Endothelial cell of umbilical vein (primary cell): ENCODE measurements at regions of chr1 and their contacts with region 1.

Region 1: DNA sequence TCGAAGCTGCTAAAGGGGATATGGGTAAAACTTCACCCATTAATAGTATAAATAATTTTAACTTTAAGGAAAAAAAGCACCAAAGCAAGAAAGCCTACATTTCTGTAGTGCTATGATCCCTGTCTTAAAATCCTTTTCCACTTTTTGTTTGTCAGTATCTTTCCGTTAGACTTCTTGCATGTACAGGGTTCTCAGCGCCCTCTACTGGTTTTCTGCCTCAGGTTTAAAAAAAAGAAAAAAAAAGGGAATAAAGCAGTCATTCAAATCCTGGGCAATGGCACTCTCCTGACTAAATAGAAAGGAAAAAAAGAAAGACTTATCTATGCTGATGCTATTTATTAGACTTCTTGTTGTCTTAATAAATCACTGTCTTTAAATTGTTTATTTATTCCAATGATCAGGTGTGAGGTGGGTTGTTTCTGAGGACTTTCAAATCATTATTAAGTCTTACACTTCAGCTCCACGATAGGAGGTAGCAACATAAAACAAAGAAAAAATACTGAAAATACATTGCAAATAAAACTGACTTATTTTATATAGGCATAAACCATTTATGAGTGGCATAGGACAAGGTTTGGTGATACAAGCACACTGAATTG is 475.4 kb upstream of the NR5A2 start:
- DNase-seq: peak; percentile 77
- H3K4me3 ChIP-seq: no peak overlapping the region
- H3K27ac ChIP-seq: no peak overlapping the region
- H3K4me1 ChIP-seq: no peaks in the 10 kb centered on the region
- H3K27me3 ChIP-seq: no peaks in the 10 kb centered on the region
- CTCF ChIP-seq: peak; percentile 46 to 65
- POLR2A ChIP-seq: no peak

Region 2: DNA sequence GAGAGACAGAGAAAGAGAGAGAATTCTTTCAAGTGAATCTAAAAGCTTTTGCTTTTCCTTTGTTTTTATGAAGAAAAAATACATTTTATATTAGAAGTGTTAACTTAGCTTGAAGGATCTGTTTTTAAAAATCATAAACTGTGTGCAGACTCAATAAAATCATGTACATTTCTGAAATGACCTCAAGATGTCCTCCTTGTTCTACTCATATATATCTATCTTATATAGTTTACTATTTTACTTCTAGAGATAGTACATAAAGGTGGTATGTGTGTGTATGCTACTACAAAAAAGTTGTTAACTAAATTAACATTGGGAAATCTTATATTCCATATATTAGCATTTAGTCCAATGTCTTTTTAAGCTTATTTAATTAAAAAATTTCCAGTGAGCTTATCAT is 795.6 kb before region 1 on chr1:
- CTCF ChIA-PET with region 1: interaction called, 9 read pairs
- POLR2A ChIA-PET with region 1: no interaction called
- dilution Hi-C with region 1: no loop called
- intact Hi-C with region 1: loop called (anchors 1 kb)
- DNase-seq: peak; percentile 27
- H3K4me3 ChIP-seq: no peak overlapping the region
- H3K27ac ChIP-seq: no peak overlapping the region
- H3K4me1 ChIP-seq: no peaks in the 10 kb centered on the region
- H3K27me3 ChIP-seq: no peaks in the 10 kb centered on the region
- CTCF ChIP-seq: no peak
- POLR2A ChIP-seq: no peak

Region 3: GRCh38 chr1:199490804-199491527 is 61.1 kb before region 1 on chr1:
- CTCF ChIA-PET with region 1: no interaction called
- POLR2A ChIA-PET with region 1: no interaction called
- dilution Hi-C with region 1: no loop called
- intact Hi-C with region 1: no loop called
- DNase-seq: no peak
- H3K4me3 ChIP-seq: no peak overlapping the region
- H3K27ac ChIP-seq: no peak overlapping the region
- H3K4me1 ChIP-seq: no peaks in the 10 kb centered on the region
- H3K27me3 ChIP-seq: peaks cover 0 to 3% of the 10 kb centered on the region in 2 experiments
- CTCF ChIP-seq: no peak
- POLR2A ChIP-seq: no peak

Region 4: DNA sequence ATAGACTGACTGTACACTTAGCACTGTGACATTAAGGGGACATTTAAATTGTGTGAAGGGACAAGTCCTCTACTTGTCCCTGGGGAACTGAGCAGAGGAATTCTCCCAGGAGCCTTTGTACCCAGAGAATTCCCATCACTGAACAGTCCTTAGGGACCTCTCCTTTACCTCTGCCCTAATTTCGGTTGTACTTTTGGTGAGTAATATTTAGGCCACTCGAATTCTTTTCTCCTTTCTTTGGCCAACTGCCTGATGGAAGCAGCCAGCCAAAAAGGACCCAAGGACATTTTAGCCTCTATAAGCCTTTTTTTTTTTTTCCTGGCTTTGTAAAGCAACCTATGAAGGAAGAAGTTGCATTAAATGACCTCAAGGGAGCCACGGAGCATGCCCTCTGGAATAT is 547.0 kb after region 1 on chr1:
- CTCF ChIA-PET with region 1: no interaction called
- POLR2A ChIA-PET with region 1: no interaction called
- dilution Hi-C with region 1: no loop called
- intact Hi-C with region 1: no loop called
- DNase-seq: no peak
- H3K4me3 ChIP-seq: no peak overlapping the region
- H3K27ac ChIP-seq: no peak overlapping the region
- H3K4me1 ChIP-seq: no peaks in the 10 kb centered on the region
- H3K27me3 ChIP-seq: peaks cover 0 to 3% of the 10 kb centered on the region in 2 experiments
- CTCF ChIP-seq: no peak
- POLR2A ChIP-seq: no peak